CD8-positive, alpha-beta T cell (primary cell): ENCODE measurements at regions of chr13 and their contacts with region 1.

Region 1: DNA sequence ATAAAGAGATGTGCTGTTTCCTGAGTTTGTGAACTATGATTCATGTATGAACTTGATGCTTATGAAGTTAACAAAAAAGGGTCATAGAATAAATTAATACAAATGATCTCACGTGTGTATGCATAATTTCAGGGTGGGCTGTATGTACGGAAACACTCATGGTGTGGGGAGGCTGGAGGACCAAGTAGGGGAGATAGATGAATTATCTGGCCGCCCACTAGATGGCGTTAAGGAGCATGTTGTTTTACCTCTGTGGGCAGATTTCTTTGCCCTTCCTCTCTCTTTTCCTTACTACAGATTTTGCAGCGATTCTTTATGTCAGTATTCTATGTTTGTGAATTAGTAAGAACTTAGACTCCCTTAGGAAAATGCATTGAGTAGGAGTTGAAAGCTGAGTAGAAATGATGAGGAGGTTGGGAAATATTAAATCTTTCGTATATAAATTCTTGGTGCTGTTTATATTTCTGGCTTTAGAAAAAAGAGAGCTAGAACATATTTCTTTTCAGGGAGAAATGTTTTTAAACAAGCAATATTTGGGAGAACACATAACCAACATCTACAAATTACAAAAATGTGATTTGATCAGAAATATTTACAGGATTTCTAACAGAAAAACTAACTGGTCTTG is 47.4 kb upstream of the TMTC4 start:
- DNase-seq: peak; percentile 12 to 63 (median 57)
- ATAC-seq: peak; percentile 52
- H3K4me3 ChIP-seq: no peak overlapping the region
- H3K4me3 Mint-ChIP-seq: no peak overlapping the region
- H3K27ac ChIP-seq: no peak overlapping the region
- H3K27ac Mint-ChIP-seq: no peak overlapping the region
- H3K4me1 ChIP-seq: no peaks in the 10 kb centered on the region
- H3K4me1 Mint-ChIP-seq: peaks cover 3% of the 10 kb centered on the region
- H3K27me3 ChIP-seq: no peaks in the 10 kb centered on the region
- H3K27me3 Mint-ChIP-seq: peaks cover 20% of the 10 kb centered on the region
- CTCF ChIP-seq: peak; percentile 79

Region 2: DNA sequence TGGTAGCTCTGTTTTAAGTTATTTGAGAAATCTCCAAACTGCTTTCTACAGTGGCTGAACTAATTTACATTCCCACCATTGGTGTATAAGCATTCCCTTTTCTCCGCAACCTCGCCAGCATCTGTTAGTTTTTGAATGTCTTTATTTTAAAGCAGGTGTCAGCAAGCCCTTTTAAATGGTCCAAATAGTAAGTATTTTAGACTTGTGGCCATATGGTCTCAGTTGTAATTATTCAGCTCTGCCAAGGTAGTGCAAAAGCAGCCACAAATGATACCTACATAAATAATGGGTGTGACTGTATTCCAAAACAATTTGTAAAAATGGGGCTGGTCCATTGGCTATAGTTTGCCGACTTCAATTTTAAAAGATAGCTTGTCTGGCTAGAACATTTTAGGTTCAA is 11.3 kb after region 1 on chr13:
- CTCF ChIA-PET with region 1: interaction called, 11 read pairs
- POLR2A ChIA-PET with region 1: no interaction called
- intact Hi-C with region 1: no loop called
- DNase-seq: no peak
- ATAC-seq: no peak
- H3K4me3 ChIP-seq: no peak overlapping the region
- H3K4me3 Mint-ChIP-seq: no peak overlapping the region
- H3K27ac ChIP-seq: no peak overlapping the region
- H3K27ac Mint-ChIP-seq: no peak overlapping the region
- H3K4me1 ChIP-seq: no peaks in the 10 kb centered on the region
- H3K4me1 Mint-ChIP-seq: no peaks in the 10 kb centered on the region
- H3K27me3 ChIP-seq: no peaks in the 10 kb centered on the region
- H3K27me3 Mint-ChIP-seq: peaks cover 21% of the 10 kb centered on the region
- CTCF ChIP-seq: no peak

Region 3: DNA sequence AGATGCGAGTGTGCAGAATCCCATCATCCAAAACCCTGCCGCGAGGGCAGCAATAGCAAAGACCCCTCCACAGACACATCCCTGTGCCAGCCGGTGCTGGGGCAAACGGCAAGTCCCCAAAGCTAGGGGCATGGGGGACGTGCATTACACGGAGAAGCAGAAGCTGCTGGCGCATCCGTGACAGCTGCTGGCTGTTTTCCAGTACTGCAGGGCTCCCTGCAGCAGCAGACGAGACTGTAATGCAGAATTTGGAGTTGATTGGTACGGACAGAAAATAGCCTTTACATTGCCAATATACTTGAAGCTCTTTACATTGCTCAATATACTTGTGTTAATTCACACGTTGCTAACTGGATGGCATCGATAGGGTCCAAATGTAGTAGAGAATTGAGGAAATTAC is 29.8 kb after region 1 on chr13:
- CTCF ChIA-PET with region 1: no interaction called
- POLR2A ChIA-PET with region 1: no interaction called
- intact Hi-C with region 1: no loop called
- DNase-seq: no peak
- ATAC-seq: no peak
- H3K4me3 ChIP-seq: no peak overlapping the region
- H3K4me3 Mint-ChIP-seq: no peak overlapping the region
- H3K27ac ChIP-seq: no peak overlapping the region
- H3K27ac Mint-ChIP-seq: no peak overlapping the region
- H3K4me1 ChIP-seq: no peaks in the 10 kb centered on the region
- H3K4me1 Mint-ChIP-seq: no peaks in the 10 kb centered on the region
- H3K27me3 ChIP-seq: no peaks in the 10 kb centered on the region
- H3K27me3 Mint-ChIP-seq: peaks cover 6% of the 10 kb centered on the region
- CTCF ChIP-seq: no peak

Region 4: GRCh38 chr13:100951016-100951415 is 229.0 kb after region 1 on chr13:
- CTCF ChIA-PET with region 1: no interaction called
- POLR2A ChIA-PET with region 1: no interaction called
- intact Hi-C with region 1: no loop called
- DNase-seq: no peak
- ATAC-seq: no peak
- H3K4me3 ChIP-seq: no peak overlapping the region
- H3K4me3 Mint-ChIP-seq: no peak overlapping the region
- H3K27ac ChIP-seq: no peak overlapping the region
- H3K27ac Mint-ChIP-seq: no peak overlapping the region
- H3K4me1 ChIP-seq: no peaks in the 10 kb centered on the region
- H3K4me1 Mint-ChIP-seq: no peaks in the 10 kb centered on the region
- H3K27me3 ChIP-seq: no peaks in the 10 kb centered on the region
- H3K27me3 Mint-ChIP-seq: peaks cover 4% of the 10 kb centered on the region
- CTCF ChIP-seq: no peak